B cell (primary cell): ENCODE measurements at regions of chr18 and their contacts with region 1.

Region 1: DNA sequence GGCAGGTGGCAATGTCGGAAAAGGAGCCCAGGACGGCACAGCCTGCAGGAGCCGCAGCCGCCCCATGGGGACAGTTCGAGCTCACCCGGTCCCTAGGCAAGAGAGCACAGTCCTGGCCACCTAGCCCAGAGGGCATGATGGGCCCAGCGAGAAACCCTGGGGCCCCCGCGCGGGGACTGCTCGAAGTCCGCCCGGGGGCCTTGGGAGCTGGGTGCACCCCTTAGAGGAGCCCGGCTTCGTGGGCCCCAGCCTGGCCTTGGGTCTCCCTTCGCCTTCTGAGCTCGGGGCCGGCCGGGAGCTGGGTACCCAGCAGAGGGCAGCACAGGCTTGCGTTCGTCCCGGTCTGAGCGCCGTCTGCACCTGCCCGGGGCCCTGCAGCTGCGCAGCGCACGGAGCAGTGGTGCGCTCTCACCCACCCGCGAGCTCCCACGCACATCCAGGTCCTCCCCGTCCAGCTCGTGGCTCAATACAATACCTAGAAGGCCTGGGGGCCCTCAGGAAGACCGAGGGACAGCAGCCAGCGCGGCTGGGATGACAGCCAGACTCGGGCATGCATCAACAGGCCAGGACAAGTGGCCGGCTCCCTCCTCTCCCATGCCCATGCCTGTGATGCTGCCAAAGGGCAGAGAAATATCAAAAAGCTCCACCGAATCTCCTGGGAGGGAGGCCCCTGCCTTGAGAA is 96.2 kb upstream of the ZNF532 start:
- DNase-seq: peak; percentile 85
- ATAC-seq: peak; percentile 83
- H3K4me3 ChIP-seq: peak overlapping the region in 3 of 5 experiments; percentile 12 to 44 (median 35)
- H3K4me3 Mint-ChIP-seq: peak overlapping the region; percentile 70
- H3K27ac ChIP-seq: no peak overlapping the region
- H3K27ac Mint-ChIP-seq: no peak overlapping the region
- H3K4me1 ChIP-seq: peaks cover 3 to 13% of the 10 kb centered on the region in 2 donors
- H3K4me1 Mint-ChIP-seq: peaks cover 11% of the 10 kb centered on the region
- H3K27me3 ChIP-seq: peaks cover 0 to 35% (median 3%) of the 10 kb centered on the region in 4 experiments
- H3K27me3 Mint-ChIP-seq: peaks cover 25% of the 10 kb centered on the region
- CTCF ChIP-seq: peak; percentile 66

Region 2: GRCh38 chr18:58402247-58402646 is 366.2 kb before region 1 on chr18:
- CTCF ChIA-PET with region 1: interaction called, 14 read pairs
- POLR2A ChIA-PET with region 1: no interaction called
- intact Hi-C with region 1: loop called (anchors 1 kb)
- DNase-seq: no peak
- ATAC-seq: no peak
- H3K4me3 ChIP-seq: no peak overlapping the region
- H3K4me3 Mint-ChIP-seq: no peak overlapping the region
- H3K27ac ChIP-seq: no peak overlapping the region
- H3K27ac Mint-ChIP-seq: no peak overlapping the region
- H3K4me1 ChIP-seq: no peaks in the 10 kb centered on the region
- H3K4me1 Mint-ChIP-seq: no peaks in the 10 kb centered on the region
- H3K27me3 ChIP-seq: no peaks in the 10 kb centered on the region
- H3K27me3 Mint-ChIP-seq: peaks cover 3% of the 10 kb centered on the region
- CTCF ChIP-seq: no peak

Region 3: GRCh38 chr18:58520969-58521368 is 247.5 kb before region 1 on chr18:
- CTCF ChIA-PET with region 1: interaction called, 337 read pairs
- POLR2A ChIA-PET with region 1: no interaction called
- intact Hi-C with region 1: no loop called
- DNase-seq: no peak
- ATAC-seq: no peak
- H3K4me3 ChIP-seq: no peak overlapping the region
- H3K4me3 Mint-ChIP-seq: no peak overlapping the region
- H3K27ac ChIP-seq: no peak overlapping the region
- H3K27ac Mint-ChIP-seq: no peak overlapping the region
- H3K4me1 ChIP-seq: peaks cover 9% of the 10 kb centered on the region in 2 donors
- H3K4me1 Mint-ChIP-seq: peaks cover 16% of the 10 kb centered on the region
- H3K27me3 ChIP-seq: no peaks in the 10 kb centered on the region
- H3K27me3 Mint-ChIP-seq: peaks cover 3% of the 10 kb centered on the region
- CTCF ChIP-seq: no peak

Region 4: DNA sequence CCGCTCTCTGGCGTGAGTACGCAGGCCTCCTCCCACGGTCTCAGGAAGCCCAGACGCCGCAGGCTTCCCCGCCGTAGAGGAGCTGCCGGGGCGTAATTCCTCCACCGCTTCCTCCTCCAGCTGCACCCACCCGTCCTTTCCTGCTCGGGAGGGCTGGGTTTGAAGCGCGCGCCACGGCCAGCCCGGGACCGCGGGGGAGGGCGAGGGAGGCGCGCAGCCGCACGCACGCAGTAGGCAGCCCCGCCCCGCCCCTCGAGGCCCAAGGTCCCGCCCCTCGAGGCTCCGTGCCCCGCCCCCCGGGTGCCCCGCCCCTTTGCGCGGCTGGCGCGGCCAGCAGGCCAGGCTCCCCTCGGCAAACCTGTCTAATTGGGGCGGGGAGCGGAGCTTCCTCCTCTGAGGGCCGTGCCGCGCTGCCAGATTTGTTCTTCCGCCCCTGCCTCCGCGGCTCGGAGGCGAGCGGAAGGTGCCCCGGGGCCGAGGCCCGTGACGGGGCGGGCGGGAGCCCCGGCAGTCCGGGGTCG is 97.3 kb before region 1 on chr18 and contains the start of gene MALT1:
- CTCF ChIA-PET with region 1: interaction called, 26 read pairs
- POLR2A ChIA-PET with region 1: interaction called, 3 read pairs
- intact Hi-C with region 1: loop called (anchors 5 kb)
- DNase-seq: peak; percentile 94
- ATAC-seq: peak; percentile 86
- H3K4me3 ChIP-seq: peak within 1 kb of the TSS; percentile 84 to 92 (median 87)
- H3K4me3 Mint-ChIP-seq: peak within 1 kb of the TSS; percentile 97
- H3K27ac ChIP-seq: peak within 1 kb of the TSS; percentile 73 to 88
- H3K27ac Mint-ChIP-seq: peak within 1 kb of the TSS; percentile 97
- H3K4me1 ChIP-seq: peaks cover 47 to 48% of the 10 kb centered on the region in 2 donors
- H3K4me1 Mint-ChIP-seq: peaks cover 63% of the 10 kb centered on the region
- H3K27me3 ChIP-seq: no peaks in the 10 kb centered on the region
- H3K27me3 Mint-ChIP-seq: no peaks in the 10 kb centered on the region
- CTCF ChIP-seq: no peak
- total RNA-seq, gene MALT1: 81.2 and 95.6 TPM in 2 replicates

Region 5: DNA sequence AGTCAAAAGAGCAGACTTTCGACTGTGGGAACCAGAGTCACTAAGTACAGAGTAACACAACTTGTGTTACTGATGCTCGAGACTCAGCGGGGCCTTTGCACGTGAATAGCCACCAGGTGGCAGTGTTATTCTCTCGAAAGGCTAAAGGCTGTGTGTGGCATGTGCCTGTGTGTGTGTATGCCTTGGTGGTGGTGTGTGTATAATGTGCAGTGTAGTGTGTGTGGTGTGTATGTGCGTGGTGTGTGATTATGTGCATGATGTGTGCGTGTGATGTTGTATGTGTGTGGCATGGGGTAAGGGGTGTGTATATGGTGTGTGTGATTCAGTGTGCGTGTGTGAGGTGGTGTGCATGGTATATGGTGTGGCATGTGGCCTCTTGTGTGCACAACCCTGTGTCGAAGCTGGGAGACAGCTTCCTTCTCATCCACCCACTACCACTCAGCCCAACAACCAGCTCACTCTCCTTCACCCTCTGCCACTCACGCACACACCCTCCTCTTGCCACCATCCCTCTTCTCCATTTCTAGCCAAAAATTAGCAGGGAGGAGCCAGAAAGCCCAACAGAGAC is 13.3 kb after region 1 on chr18:
- CTCF ChIA-PET with region 1: interaction called, 22 read pairs
- POLR2A ChIA-PET with region 1: no interaction called
- intact Hi-C with region 1: no loop called
- DNase-seq: peak; percentile 84
- ATAC-seq: peak; percentile 93
- H3K4me3 ChIP-seq: no peak overlapping the region
- H3K4me3 Mint-ChIP-seq: no peak overlapping the region
- H3K27ac ChIP-seq: no peak overlapping the region
- H3K27ac Mint-ChIP-seq: no peak overlapping the region
- H3K4me1 ChIP-seq: peaks cover 2 to 5% of the 10 kb centered on the region in 2 donors
- H3K4me1 Mint-ChIP-seq: peaks cover 3% of the 10 kb centered on the region
- H3K27me3 ChIP-seq: no peaks in the 10 kb centered on the region
- H3K27me3 Mint-ChIP-seq: no peaks in the 10 kb centered on the region
- CTCF ChIP-seq: peak; percentile 93

Region 6: DNA sequence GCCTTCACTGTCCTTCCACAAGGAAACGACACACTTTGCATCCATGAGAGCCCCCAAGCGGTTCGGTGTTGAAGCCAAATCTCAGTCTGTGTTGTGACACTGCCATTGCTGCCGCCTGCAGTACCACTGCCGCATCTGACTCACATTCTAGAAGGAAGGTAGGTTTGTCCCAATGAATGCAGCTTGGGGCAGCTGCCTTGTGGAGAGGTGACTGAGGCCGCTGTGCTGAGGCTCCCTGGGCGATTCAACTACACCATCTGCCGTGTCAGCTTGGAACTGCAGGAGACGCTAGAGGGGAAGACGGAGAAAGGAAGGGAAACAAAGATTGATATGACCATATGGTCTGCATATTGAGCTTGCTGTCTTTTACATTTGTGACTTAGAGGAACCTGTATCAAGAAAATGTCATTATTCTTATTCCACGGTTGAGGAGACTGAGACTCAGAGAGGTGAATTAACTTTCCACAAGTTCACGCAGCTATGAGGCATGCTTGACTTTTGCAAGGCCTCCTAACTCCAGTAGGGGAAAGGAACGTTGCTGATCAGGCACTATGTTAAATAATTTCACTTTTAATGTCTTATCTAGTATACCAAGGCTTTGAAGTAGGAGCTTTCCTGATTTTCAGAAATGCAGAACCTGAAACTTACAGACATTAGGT is 634.1 kb after region 1 on chr18:
- CTCF ChIA-PET with region 1: interaction called, 16 read pairs
- POLR2A ChIA-PET with region 1: no interaction called
- intact Hi-C with region 1: no loop called
- DNase-seq: peak; percentile 71
- ATAC-seq: peak; percentile 91
- H3K4me3 ChIP-seq: no peak overlapping the region
- H3K4me3 Mint-ChIP-seq: no peak overlapping the region
- H3K27ac ChIP-seq: no peak overlapping the region
- H3K27ac Mint-ChIP-seq: no peak overlapping the region
- H3K4me1 ChIP-seq: no peaks in the 10 kb centered on the region
- H3K4me1 Mint-ChIP-seq: no peaks in the 10 kb centered on the region
- H3K27me3 ChIP-seq: no peaks in the 10 kb centered on the region
- H3K27me3 Mint-ChIP-seq: peaks cover 9% of the 10 kb centered on the region
- CTCF ChIP-seq: peak; percentile 88

Region 7: DNA sequence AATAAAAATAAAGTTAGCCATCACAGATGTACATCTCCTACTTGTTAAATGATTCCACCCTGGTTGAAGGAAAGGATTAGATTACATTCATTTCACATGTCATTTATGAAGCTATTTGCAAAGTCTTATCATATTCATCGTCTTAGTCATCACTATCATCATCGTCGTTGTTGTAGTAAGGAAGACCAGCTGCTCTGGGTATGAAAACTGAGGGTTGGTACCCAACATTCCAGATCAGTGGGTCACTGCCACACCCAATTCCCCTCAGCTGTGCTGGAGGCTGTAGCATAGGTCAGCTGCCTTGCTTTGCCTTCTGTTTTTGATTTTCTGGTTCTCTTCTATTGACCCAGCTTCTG is 949.7 kb after region 1 on chr18:
- CTCF ChIA-PET with region 1: no interaction called
- POLR2A ChIA-PET with region 1: no interaction called
- intact Hi-C with region 1: no loop called
- DNase-seq: no peak
- ATAC-seq: no peak
- H3K4me3 ChIP-seq: no peak overlapping the region
- H3K4me3 Mint-ChIP-seq: no peak overlapping the region
- H3K27ac ChIP-seq: no peak overlapping the region
- H3K27ac Mint-ChIP-seq: no peak overlapping the region
- H3K4me1 ChIP-seq: no peaks in the 10 kb centered on the region
- H3K4me1 Mint-ChIP-seq: no peaks in the 10 kb centered on the region
- H3K27me3 ChIP-seq: peaks cover 0 to 3% (median 0%) of the 10 kb centered on the region in 4 experiments
- H3K27me3 Mint-ChIP-seq: peaks cover 20% of the 10 kb centered on the region
- CTCF ChIP-seq: no peak